Astrocyte of the cerebellum (primary cell): ENCODE measurements at regions of chr9 and their contacts with region 1.

Region 1: GRCh38 chr9:20065796-20066700 is 277.2 kb upstream of the SLC24A2 start:
- DNase-seq: no peak
- H3K4me3 ChIP-seq: no peak overlapping the region
- CTCF ChIP-seq: no peak

Region 2: GRCh38 chr9:20022410-20022809 is 43.6 kb before region 1 on chr9:
- in situ Hi-C with region 1: no loop called
- DNase-seq: no peak
- H3K4me3 ChIP-seq: no peak overlapping the region
- CTCF ChIP-seq: no peak

Region 3: DNA sequence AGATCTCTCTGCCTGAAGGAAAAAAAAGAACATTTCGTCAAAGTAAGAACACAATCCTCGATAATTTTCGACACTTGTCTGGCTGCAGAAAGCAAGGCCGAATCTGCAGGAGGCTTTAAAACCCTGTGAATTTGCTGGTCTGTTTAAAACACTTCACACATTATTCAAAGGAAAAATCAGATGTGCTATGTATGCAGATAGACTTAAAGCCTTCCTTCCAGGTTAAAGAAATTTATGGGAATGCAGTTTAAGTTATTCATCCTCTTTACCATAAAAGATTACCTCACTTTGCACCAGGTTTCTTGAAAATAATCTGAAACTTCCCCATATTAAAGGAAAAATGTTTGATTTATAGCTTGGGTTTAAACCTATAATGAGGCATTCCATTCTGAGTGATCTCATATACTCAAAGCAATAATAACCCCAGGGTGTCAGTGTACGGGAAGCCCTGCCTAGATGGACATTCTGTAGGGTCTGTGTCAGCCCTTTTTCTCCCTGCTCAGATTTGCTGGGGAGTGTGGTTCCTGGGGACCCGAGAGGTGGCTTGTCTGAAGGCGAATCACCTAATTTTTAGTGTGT is 46.2 kb after region 1 on chr9:
- in situ Hi-C with region 1: no loop called
- DNase-seq: no peak
- H3K4me3 ChIP-seq: no peak overlapping the region
- CTCF ChIP-seq: no peak

Region 4: GRCh38 chr9:20152151-20152725 is 86.2 kb after region 1 on chr9:
- in situ Hi-C with region 1: loop called (anchors 5 kb)
- DNase-seq: no peak
- H3K4me3 ChIP-seq: no peak overlapping the region
- CTCF ChIP-seq: no peak

Region 5: DNA sequence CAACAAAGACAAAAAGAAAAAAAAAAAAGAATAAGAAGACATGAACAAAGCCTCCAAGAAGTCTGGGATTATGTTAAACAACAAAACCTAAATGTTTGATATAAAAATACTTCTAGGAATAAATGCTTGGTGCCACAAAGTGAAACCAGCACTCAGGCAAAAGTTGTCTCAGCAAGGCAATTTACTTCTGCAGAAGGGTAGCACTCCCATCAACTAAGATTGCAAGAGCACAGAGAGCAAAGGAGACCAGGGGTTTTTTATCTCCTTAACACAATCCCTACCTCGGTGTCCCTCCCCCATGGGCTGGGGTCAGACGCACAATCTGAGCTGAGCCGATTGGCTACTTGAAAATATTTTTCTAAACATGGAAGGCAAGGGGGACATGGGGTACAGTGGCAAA is 104.1 kb after region 1 on chr9:
- in situ Hi-C with region 1: no loop called
- DNase-seq: no peak
- H3K4me3 ChIP-seq: no peak overlapping the region
- CTCF ChIP-seq: no peak